ENCODE measurements at regions of chr5 and their contacts with region 1.

Region 1: DNA sequence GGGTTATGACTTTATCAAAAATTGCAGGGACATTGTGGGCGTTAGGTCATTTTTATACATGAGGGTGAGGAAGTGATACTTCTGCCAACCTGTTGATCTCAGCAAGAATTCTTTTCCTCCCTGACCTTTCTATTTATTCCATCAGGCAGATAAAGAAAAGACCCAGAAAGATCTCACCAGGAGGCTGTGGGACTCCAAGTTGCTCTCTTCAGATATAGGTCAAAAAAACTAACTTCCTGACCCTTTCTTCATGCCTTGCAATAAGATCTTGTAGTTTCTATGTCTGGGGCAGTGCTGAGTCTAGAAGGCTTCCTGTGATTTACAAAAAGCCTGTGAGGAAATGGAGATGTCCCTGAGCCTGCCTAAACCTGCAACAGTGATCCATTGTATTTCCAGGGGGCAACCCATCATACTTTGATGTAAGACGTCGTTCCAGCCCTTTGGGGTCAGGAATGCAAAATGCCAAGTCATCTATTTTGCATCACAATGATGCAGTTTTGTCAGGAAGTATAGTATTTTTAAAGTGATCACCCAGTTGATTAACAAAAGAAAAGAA is 22.0 kb upstream of the PIK3R1 start:
- DNase-seq: no peak
- ATAC-seq: peak in 1 of 4 experiments; percentile 30
- H3K4me3 ChIP-seq: no peak overlapping the region
- H3K4me3 Mint-ChIP-seq: no peak overlapping the region
- H3K27ac ChIP-seq: no peak overlapping the region
- H3K27ac Mint-ChIP-seq: no peak overlapping the region
- H3K4me1 ChIP-seq: no peaks in the 10 kb centered on the region
- H3K4me1 Mint-ChIP-seq: peaks cover 0 to 10% (median 8%) of the 10 kb centered on the region in 3 donors
- H3K27me3 ChIP-seq: no peaks in the 10 kb centered on the region
- H3K27me3 Mint-ChIP-seq: no peaks in the 10 kb centered on the region

Region 2: GRCh38 chr5:67807439-67807888 is 386.1 kb before region 1 on chr5:
- CTCF ChIA-PET with region 1: no interaction called
- POLR2A ChIA-PET with region 1: interaction called in 1 of 2 experiments, 12 read pairs
- DNase-seq: no peak
- ATAC-seq: no peak
- H3K4me3 ChIP-seq: no peak overlapping the region
- H3K4me3 Mint-ChIP-seq: no peak overlapping the region
- H3K27ac ChIP-seq: no peak overlapping the region
- H3K27ac Mint-ChIP-seq: no peak overlapping the region
- H3K4me1 ChIP-seq: no peaks in the 10 kb centered on the region
- H3K4me1 Mint-ChIP-seq: peaks cover 0 to 8% (median 0%) of the 10 kb centered on the region in 3 donors
- H3K27me3 ChIP-seq: no peaks in the 10 kb centered on the region
- H3K27me3 Mint-ChIP-seq: peaks cover 5 to 7% of the 10 kb centered on the region in 2 donors